HepG2 (cell line): ENCODE measurements at regions of chr2 and their contacts with region 1.

Region 1: GRCh38 chr2:85420536-85421259 is 2.2 kb downstream of the SH2D6 start:
- DNase-seq: peak; percentile 90
- ATAC-seq: peak; percentile 66
- H3K4me3 ChIP-seq: peak overlapping the region; percentile 41 to 97 (median 91)
- H3K27ac ChIP-seq: peak overlapping the region; percentile 83
- H3K4me1 ChIP-seq: peaks cover 58% of the 10 kb centered on the region
- H3K27me3 ChIP-seq: no peaks in the 10 kb centered on the region
- CTCF ChIP-seq: peak; percentile 100; the same call in 1 of the 2 replicates
- EP300 ChIP-seq: peak; percentile 46 to 74; a peak in 2 of 4 replicates
- POLR2A ChIP-seq: no peak
- RAD21 ChIP-seq: peak; percentile 100

Region 2: DNA sequence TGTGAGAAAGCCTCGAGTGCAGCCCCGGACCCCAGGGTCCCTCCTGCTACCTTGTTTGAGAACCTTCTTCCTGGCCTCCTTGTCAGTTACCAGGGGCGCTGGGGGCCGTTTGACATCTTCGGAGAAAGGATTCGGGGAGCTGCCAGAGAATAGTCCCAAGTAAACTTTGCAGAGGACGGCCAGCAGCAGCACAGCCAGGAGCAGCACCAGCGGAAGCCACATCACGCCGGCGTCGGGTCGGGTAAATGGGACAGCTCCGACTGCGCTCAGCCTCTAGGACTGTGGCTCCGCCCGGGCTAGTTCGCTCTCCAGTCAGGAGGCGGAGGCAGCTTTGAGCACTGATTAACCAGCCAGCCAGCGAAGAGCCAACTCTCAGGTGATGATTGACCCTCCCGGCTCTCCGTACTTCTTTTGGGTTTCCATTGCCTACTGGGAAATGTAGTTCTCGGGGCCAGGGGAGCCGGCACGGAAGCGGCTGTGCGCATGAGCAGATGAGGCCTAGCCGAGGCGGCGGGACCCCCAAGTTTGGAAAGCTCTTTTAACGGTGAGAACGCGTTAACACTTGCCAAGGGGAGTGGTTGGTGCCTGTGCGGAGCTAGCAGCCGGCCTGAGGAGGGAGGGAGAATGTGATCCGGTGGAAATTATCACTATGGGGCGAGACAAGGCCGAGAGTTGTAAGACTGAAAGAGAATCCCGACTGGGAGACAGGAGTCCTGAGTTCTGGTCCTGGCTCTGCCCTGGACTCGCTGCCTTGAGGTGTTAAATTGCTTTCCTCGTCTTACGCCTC is 66.2 kb before region 1 on chr2 and contains the starts of genes ELMOD3 and RETSAT:
- CTCF ChIA-PET with region 1: no interaction called
- POLR2A ChIA-PET with region 1: interaction called, 30 read pairs
- in situ Hi-C with region 1: no loop called
- intact Hi-C with region 1: loop called (anchors 1 kb)
- DNase-seq: peak; percentile 100
- ATAC-seq: peak; percentile 98
- H3K4me3 ChIP-seq: peak within 1 kb of the TSS; percentile 89 to 93 (median 91)
- H3K27ac ChIP-seq: peak within 1 kb of the TSS; percentile 72
- H3K4me1 ChIP-seq: peaks cover 33% of the 10 kb centered on the region
- H3K27me3 ChIP-seq: no peaks in the 10 kb centered on the region; a peak in 1 of 5 replicates
- CTCF ChIP-seq: peak; percentile 13; the same call in 1 of the 2 replicates
- EP300 ChIP-seq: peak in 1 of 2 experiments; percentile 61; a peak in 1 of 4 replicates
- POLR2A ChIP-seq: peak; percentile 100
- RAD21 ChIP-seq: peak; percentile 67
- total RNA-seq, gene ELMOD3: 10.3 and 13.3 TPM in 2 replicates
- total RNA-seq, gene RETSAT: 17.2 and 46.7 TPM in 2 replicates

Region 3: DNA sequence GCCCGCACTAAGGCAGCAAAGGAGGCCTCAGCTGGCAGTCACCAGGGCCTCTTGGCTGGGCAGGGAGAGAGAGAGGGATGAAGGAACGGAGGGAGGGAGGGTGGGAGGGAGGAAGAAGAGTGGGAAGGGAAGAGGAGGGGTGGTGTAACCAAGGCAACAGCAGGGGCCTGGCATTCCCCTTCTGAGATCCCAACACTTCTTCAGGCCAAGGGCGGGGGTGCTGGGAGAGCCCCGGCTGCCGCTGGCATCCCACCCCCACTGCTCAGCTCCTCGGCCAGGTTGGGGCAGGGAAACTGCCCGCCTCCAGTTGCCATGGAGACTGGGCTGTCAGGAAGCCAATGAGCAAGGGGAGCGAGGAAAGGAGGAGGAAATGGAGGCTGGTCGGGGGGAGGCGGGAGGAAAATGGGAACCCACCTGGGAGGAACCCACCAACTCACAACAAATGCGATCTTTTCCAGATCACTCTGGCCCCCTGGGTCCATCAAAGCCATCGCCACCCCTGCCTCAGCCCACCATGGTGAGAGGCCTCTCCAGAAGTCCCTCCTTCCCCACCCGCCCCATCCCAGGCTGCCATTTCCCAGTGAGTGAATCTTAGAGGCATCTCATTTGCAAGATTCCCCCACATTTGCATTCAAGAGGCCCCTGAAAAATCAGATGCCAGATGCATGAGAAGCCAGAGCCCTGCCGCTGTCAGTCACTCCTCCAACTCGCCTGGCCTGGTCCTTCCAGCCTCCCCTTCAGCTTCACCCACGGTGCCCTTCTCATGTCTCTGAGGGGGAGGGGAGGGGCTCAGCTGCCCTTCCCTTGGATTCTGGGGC is 10.3 kb after region 1 on chr2:
- CTCF ChIA-PET with region 1: no interaction called
- POLR2A ChIA-PET with region 1: interaction called, 15 read pairs
- in situ Hi-C with region 1: no loop called
- intact Hi-C with region 1: no loop called
- DNase-seq: no peak
- ATAC-seq: no peak
- H3K4me3 ChIP-seq: no peak overlapping the region
- H3K27ac ChIP-seq: no peak overlapping the region
- H3K4me1 ChIP-seq: peaks cover 38% of the 10 kb centered on the region
- H3K27me3 ChIP-seq: peaks cover 10 to 66% of the 10 kb centered on the region in 2 experiments
- CTCF ChIP-seq: no peak
- EP300 ChIP-seq: no peak
- POLR2A ChIP-seq: no peak
- RAD21 ChIP-seq: no peak

Region 4: DNA sequence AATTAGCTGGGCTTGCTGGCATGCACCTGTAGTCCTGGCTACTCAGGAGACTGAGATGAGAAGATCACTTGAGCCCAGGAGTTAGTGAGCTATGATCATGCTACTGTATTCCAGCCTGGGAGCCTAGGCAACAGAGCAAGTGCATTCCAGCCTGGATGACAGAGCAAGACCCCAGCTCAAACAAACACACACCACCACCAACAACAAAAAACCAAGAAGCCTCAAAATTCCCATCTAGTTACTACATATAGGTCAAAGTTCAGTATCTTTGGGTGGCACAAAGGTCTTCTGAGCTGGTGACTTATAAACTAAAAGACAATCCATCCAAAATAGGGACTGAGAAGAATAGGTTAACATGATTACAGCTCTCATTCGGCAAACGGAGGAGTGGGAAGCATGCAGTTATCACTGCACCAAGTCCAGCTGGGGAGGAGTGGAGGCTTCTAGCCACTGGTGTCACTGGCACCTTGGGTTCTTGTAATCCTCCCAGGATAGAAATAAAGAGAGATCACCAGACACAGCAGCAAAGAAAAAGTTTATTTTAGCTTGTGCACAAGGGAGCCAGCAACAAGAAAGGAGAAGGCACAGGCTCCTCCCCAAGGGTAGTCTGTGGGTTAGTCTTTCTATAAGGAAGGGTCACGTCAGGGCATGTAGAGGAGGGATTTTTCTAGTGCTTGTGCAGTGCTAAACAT is 55.2 kb after region 1 on chr2:
- CTCF ChIA-PET with region 1: no interaction called
- POLR2A ChIA-PET with region 1: interaction called, 96 read pairs
- in situ Hi-C with region 1: no loop called
- intact Hi-C with region 1: loop called (anchors 1 kb)
- DNase-seq: peak; percentile 74
- ATAC-seq: peak; percentile 73
- H3K4me3 ChIP-seq: no peak overlapping the region; a peak in 1 of 6 replicates
- H3K27ac ChIP-seq: peak overlapping the region; percentile 30
- H3K4me1 ChIP-seq: peaks cover 52% of the 10 kb centered on the region
- H3K27me3 ChIP-seq: no peaks in the 10 kb centered on the region
- CTCF ChIP-seq: no peak
- EP300 ChIP-seq: peak in 1 of 2 experiments; percentile 47; a peak in 1 of 4 replicates
- POLR2A ChIP-seq: no peak
- RAD21 ChIP-seq: no peak

Region 5: DNA sequence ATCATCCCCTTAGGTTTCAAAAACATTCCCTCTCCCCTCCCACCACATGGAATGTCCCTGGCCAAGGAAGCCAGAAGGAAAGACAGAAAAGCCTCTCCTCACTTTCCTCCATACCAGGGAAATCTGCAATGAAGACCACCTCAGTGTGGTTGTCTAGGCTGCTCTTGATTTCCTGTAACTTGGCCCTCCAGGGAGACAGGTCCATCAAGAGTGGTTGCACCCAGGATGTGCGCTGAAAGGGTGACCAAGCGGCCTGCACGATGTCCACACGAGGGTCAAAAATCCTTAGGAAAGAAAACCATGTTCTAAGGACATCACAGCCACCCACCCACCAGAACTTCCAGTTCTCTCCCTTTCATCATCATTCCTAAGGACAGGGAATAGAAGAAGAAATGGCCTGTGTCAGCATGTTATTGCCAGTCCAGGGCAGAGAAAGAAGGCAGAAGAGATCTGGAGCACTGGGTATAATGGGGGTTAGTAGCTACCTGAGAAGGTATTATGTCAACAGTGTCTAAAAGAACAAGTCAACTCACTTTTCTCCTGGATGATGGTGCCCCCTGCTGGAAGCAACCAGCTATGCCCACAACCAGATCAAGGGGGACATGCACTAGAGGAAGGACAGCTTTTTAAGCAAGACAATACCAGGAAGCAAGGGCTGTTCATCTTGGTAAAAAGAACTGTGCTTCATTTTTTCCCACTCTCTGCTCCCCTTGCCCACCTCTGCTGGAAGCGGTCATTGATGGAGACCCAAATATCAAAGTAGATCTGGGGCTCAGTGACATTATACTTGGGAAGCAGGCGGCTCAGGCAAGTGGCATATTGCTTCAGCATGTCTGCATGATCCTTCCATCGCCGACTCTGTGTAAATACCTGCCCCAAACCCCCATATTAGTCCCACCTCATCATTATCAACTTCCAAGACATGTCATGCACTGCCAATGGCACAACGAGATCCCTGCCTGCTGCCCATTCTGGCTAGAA is 131.3 kb after region 1 on chr2:
- CTCF ChIA-PET with region 1: interaction called, 45 read pairs
- POLR2A ChIA-PET with region 1: interaction called, 219 read pairs
- in situ Hi-C with region 1: loop called (anchors 5 kb)
- intact Hi-C with region 1: loop called (anchors 1 kb)
- DNase-seq: peak; percentile 83
- ATAC-seq: peak; percentile 57
- H3K4me3 ChIP-seq: no peak overlapping the region
- H3K27ac ChIP-seq: no peak overlapping the region
- H3K4me1 ChIP-seq: peaks cover 4% of the 10 kb centered on the region
- H3K27me3 ChIP-seq: no peaks in the 10 kb centered on the region
- CTCF ChIP-seq: peak; percentile 96
- EP300 ChIP-seq: no peak
- POLR2A ChIP-seq: no peak; a peak in 1 of 4 replicates
- RAD21 ChIP-seq: peak; percentile 97

Region 6: GRCh38 chr2:85595301-85596025 is 174.8 kb after region 1 on chr2 and contains the start of gene RNF181:
- CTCF ChIA-PET with region 1: no interaction called
- POLR2A ChIA-PET with region 1: interaction called, 60 read pairs
- in situ Hi-C with region 1: no loop called
- intact Hi-C with region 1: loop called (anchors 5 kb)
- DNase-seq: peak; percentile 99
- ATAC-seq: peak; percentile 92
- H3K4me3 ChIP-seq: peak within 1 kb of the TSS; percentile 88 to 97 (median 90)
- H3K27ac ChIP-seq: peak within 1 kb of the TSS; percentile 80
- H3K4me1 ChIP-seq: peaks cover 86% of the 10 kb centered on the region
- H3K27me3 ChIP-seq: no peaks in the 10 kb centered on the region; a peak in 1 of 5 replicates
- CTCF ChIP-seq: no peak
- EP300 ChIP-seq: no peak
- POLR2A ChIP-seq: peak in 1 of 2 experiments; percentile 77; a peak in 1 of 4 replicates
- RAD21 ChIP-seq: no peak; the same call in 1 of the 2 replicates
- total RNA-seq, gene RNF181: 224 and 234 TPM in 2 replicates